GM18951 (cell line): ENCODE measurements at regions of chr5 and their contacts with region 1.

Region 1: DNA sequence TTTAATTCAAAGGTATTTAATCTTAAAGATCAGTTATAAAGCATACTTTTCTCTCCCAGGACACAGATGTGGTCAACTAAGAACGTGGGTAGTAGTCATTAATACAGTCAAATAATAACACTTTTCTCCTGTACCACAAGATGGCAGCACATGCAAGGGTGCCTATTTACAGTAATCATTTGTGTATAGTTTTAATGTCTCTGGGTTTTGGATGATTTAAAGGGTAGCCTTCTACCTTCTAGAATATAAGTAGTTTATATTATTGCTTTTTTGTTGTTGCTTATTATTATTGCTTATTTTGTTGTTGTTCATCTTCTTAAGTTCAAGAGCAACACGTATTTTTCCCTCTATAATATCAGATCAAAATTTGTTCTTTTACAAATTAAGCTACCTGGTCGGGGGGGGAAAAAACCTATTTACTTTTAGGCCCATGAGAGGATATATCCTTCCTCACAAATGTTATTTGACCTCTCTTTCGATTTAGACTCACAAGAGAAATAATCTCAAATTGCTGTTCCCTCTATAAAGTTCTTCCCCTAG is 59.6 kb upstream of the SLC27A6 start:
- POLR2A ChIP-seq: no peak

Region 2: DNA sequence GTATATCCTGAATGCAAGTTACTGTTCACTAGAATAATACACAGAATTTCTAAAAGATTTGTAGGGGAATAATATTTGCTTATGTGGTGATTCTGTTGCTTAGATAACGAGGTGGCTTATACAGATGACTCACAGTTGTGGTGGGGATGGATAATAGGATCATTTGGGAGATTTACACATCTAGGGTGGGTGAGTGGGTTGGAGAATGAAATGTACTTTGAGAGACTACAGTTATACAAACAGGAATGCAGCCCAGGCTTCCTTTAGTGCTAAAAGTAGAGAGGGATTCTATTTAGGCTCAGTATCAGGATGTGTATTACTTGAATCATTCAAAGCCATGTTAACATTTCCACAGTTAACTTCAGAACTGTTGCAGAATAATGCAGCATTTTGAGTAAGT is 1255.0 kb before region 1 on chr5:
- in situ Hi-C with region 1: no loop called
- POLR2A ChIP-seq: no peak

Region 3: DNA sequence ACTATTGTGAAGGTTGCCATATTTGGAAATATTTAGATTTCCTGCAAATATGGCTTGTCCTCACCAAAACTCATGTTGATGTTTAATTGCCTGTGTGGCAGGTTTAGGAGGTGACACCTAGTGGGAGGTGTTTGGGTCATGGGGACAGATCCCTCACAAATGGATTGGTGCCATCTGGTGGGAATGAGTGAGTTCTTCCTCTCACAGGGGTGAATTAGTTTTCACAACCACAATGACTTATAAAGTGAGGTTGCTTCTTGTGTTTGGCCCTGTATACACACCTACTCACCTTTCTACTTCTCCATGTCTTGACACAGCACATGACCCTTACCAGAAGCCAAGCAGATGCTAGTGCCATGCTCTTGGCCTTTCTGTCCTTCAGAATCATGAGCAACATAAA is 230.0 kb after region 1 on chr5:
- in situ Hi-C with region 1: loop called (anchors 25 kb)
- POLR2A ChIP-seq: no peak

Region 4: DNA sequence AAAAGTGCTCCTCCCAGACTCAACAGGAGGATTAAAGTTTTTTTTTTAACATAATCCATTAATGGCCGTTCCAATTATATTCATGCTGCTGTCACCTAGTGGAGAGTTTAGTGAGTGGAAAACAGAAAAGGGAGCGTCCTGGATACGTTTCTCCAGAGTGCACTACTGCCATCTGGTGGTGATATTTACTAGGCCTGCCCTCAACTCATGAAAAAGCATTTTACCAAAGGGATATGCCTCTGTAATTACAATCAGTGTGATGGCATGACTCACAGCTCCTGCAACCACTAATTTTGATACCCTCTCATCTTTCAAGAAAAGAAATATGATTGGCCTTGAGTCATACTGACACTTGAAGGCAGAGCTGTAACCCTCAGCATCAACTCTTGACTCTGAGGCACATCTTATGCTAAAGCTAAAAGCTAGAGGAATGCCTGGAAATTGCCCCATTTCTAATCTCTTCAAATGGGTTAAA is 862.3 kb after region 1 on chr5:
- in situ Hi-C with region 1: loop called (anchors 25 kb)
- POLR2A ChIP-seq: no peak